ENCODE measurements at regions of chr16 and their contacts with region 1.

Region 1: GRCh38 chr16:11613381-11614303 is 26.9 kb upstream of the LITAF start:
- DNase-seq: peak; percentile 54 to 70
- H3K4me3 ChIP-seq: no peak overlapping the region
- H3K27ac ChIP-seq: peak overlapping the region; percentile 94
- H3K4me1 ChIP-seq: peaks cover 84% of the 10 kb centered on the region
- H3K27me3 ChIP-seq: no peaks in the 10 kb centered on the region
- CTCF ChIP-seq: no peak

Region 2: DNA sequence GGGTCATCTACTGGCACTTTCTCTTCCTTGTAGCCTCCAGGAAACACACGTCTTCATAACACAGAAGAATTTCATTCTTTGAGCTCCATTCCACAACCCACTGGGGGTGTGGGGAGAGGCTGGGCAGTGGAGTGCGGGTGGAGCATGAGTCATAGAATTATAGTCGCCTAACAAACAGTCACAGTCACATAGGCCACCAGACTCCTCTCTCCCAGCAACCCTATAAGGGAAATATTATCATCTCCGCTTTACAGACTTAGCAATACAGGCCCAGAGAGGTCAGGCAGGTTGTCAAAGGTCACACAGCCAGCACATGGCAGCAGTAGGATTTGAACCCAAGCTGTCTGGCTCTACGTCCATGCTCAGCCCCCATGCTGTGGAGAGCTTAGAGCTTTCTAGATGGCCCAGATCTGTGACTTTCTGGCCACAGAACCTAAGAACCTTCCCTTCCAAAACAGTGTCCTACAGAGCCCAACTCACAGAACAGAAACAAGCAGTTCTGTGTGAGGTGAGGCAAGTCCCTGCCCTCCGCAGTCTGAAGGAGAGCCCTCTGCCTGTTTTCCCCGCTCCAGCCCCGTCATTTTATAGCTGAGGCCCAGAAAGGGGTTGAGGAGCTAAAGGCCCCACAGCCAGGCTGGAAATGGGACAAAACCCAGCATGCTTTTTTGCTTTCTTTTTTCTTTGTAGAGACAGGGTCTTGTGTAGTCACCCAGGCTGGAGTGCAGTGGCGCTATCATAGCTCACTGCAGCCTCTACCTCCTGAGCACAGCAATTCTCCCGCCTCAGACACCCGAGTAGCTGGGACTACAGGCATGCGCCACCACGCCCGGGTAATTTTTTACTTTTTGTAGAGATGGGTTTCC is 16.2 kb before region 1 on chr16:
- CTCF ChIA-PET with region 1: no interaction called
- POLR2A ChIA-PET with region 1: interaction called, 9 read pairs
- intact Hi-C with region 1: loop called (anchors 1 kb)
- DNase-seq: peak; percentile 74 to 77
- H3K4me3 ChIP-seq: no peak overlapping the region
- H3K27ac ChIP-seq: peak overlapping the region; percentile 84
- H3K4me1 ChIP-seq: peaks cover 41% of the 10 kb centered on the region
- H3K27me3 ChIP-seq: no peaks in the 10 kb centered on the region
- CTCF ChIP-seq: no peak

Region 3: GRCh38 chr16:11629071-11629962 is 15.7 kb after region 1 on chr16:
- CTCF ChIA-PET with region 1: interaction called, 10 read pairs
- POLR2A ChIA-PET with region 1: no interaction called
- intact Hi-C with region 1: loop called (anchors 1 kb)
- DNase-seq: no peak
- H3K4me3 ChIP-seq: no peak overlapping the region
- H3K27ac ChIP-seq: peak overlapping the region; percentile 98
- H3K4me1 ChIP-seq: peaks cover 49% of the 10 kb centered on the region
- H3K27me3 ChIP-seq: no peaks in the 10 kb centered on the region
- CTCF ChIP-seq: no peak

Region 4: GRCh38 chr16:11675561-11676511 is 62.2 kb after region 1 on chr16:
- CTCF ChIA-PET with region 1: no interaction called
- POLR2A ChIA-PET with region 1: no interaction called
- intact Hi-C with region 1: loop called (anchors 2 kb)
- DNase-seq: peak; percentile 60 to 90
- H3K4me3 ChIP-seq: no peak overlapping the region
- H3K27ac ChIP-seq: no peak overlapping the region
- H3K4me1 ChIP-seq: no peaks in the 10 kb centered on the region
- H3K27me3 ChIP-seq: no peaks in the 10 kb centered on the region
- CTCF ChIP-seq: no peak; the same call in 1 of the 2 replicates